Left ventricle myocardium superior (tissue), 1 donor: ENCODE measurements at regions of chr2 and their contacts with region 1.

Region 1: DNA sequence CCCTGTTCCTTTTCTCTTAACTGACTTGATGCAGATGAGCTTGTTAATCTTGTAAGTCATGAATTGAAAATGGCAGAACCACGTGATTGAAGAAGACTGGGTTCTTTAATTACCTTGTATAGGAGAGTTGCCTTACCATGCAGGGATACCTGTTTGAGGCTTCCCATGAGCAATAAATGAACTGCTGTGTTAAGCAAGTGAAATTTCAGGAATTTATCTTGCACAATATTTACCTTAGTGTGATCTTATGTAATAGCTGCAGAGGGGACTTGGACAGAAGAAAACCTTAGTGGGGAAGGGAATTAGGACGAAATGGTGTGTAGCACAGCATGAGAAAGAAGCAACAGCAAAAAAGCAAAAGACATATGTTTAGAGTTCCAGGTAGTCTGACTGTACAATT is 384.0 kb upstream of the TMEFF2 start:
- DNase-seq: no peak
- ATAC-seq: no peak

Region 2: GRCh38 chr2:191933307-191934105 is 645.3 kb before region 1 on chr2:
- intact Hi-C with region 1: no loop called
- DNase-seq: no peak
- ATAC-seq: no peak

Region 3: GRCh38 chr2:192877159-192877558 is 298.4 kb after region 1 on chr2:
- intact Hi-C with region 1: loop called (anchors 5 kb)
- DNase-seq: no peak
- ATAC-seq: no peak

Region 4: DNA sequence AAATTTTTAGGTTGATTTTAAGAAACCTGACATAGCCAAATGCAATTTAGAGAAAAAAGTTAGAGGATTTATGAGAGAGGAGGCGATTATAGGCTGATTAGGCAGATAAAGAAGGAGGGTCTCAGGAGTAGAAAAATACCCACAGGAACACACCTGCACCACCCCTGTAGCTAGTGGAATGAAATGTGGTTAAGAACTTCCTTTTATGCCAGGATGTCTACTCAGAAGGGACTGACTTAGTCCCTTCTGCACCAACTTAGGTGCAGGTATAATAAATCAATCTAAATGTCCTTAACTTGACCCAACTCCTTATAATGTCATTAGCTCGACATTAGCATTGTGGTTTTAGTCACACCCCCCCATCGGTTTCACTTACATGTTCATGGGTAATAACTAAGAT is 890.5 kb after region 1 on chr2:
- intact Hi-C with region 1: no loop called
- DNase-seq: no peak
- ATAC-seq: no peak